Heart left ventricle (tissue), 16 donors: ENCODE measurements at regions of chr16 and their contacts with region 1.

Region 1: DNA sequence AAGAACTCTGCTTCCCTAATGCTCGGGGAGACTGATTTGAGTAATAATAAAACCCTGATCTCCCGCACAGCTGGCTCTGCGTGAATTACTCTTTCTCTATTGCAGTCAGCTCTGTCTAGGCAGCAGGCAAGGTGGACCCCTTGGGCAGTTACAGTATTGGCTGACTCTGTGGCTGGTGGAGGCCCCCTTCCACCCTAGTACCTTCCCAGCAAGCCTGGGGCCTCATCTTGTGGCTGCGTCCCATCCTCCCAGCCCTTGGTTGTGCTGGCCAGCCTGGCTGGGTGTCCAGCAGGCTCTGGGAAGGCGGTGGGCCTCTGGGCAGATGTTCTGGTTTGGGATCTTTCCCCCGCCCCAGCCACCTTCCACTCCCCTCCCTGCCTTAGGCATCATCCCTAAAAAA is 44.5 kb downstream of the CFAP20 start:
- DNase-seq: no peak
- ATAC-seq: no peak
- H3K4me3 ChIP-seq: no peak overlapping the region
- H3K27ac ChIP-seq: no peak overlapping the region
- H3K4me1 ChIP-seq: peaks cover 0 to 25% (median 9%) of the 10 kb centered on the region in 12 donors
- H3K27me3 ChIP-seq: no peaks in the 10 kb centered on the region
- CTCF ChIP-seq: no peak
- POLR2A ChIP-seq: no peak

Region 2: GRCh38 chr16:57916735-57917451 is 167.8 kb before region 1 on chr16:
- intact Hi-C with region 1: no loop called
- DNase-seq: no peak
- ATAC-seq: no peak
- H3K4me3 ChIP-seq: no peak overlapping the region
- H3K27ac ChIP-seq: no peak overlapping the region
- H3K4me1 ChIP-seq: no peaks in the 10 kb centered on the region
- H3K27me3 ChIP-seq: no peaks in the 10 kb centered on the region
- CTCF ChIP-seq: no peak
- POLR2A ChIP-seq: no peak

Region 3: DNA sequence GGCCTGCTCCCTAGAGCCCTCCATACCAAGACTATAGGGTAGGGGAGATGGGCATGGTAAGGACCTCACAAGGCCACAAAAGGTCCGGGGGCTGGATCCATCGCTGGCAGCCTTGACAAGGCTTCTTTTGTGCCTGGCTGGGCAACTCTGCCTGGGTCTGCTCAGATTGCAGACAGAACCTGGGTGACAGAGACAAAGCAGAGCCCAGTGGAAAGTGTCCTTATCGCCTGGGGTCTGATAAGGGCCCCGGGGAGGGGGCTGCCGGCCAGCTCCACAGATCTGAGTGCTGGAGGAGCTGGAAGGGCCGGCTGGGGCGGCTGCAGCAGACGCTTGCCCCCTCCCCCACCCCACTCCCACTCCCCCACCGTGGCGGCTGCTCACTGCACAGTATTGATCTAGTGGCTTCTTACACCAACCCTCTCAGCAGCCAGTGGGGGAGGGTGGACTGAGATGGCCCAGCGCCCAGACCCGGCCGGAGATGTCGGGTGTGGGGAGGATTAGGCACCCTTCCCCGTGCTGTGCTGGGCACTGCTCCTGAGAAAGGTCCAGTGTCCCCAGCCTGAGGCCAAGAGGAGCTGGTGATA is 51.8 kb before region 1 on chr16:
- intact Hi-C with region 1: loop called in 2 of 10 experiments (anchors 5 kb)
- DNase-seq: peak; percentile 78 to 87 (median 86)
- ATAC-seq: peak; percentile 82 to 86 (median 84)
- H3K4me3 ChIP-seq: peak overlapping the region in 1 of 12 donors; percentile 12
- H3K27ac ChIP-seq: peak overlapping the region in 11 of 12 donors; percentile 3 to 99 (median 86)
- H3K4me1 ChIP-seq: peaks cover 23 to 96% (median 86%) of the 10 kb centered on the region in 12 donors
- H3K27me3 ChIP-seq: peaks cover 0 to 3% (median 0%) of the 10 kb centered on the region in 9 donors
- CTCF ChIP-seq: no peak
- POLR2A ChIP-seq: no peak

Region 4: DNA sequence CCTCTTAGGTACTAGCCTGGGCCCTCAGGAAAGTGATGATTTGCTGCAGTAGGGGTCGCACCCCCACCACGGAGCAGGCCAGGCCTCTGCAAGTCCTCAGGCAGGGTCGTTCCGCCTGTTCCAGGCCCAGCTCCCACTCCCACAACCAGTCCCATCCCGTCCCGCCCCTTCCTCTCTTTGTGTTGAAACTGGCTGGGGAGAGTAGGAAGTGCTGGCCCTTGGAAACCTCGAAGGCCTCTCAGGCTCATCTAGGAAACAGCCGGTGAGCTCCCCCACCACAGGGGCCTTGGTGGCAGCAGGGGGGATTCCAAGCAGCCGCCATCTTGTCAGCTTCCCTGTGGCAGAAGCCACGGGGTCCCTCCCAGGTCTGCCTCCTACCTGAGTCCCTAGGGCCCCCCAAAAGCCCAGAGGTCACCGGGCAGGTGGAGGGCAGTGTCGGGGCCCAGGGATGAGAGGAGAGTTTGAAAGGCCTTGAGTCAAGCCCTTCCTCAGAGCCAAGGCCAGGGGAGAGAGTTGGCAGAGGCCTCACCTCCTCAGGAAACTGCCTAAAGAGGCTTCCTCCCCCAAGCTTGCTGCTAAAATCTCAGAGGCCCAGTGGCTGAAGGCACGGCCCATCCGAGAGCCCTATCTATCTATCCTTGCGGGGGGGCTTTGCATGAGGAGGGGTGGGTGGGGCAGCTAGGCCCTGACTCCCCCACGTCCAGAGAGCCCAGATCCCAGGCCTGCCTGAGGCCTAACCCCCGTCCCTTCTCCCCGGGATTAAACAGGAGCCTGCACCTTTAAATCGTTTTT is 36.9 kb before region 1 on chr16:
- intact Hi-C with region 1: loop called in 1 of 10 experiments (anchors 5 kb)
- DNase-seq: peak in 3 of 5 donors; percentile 54 to 63 (median 58)
- ATAC-seq: peak; percentile 9 to 71 (median 38)
- H3K4me3 ChIP-seq: no peak overlapping the region
- H3K27ac ChIP-seq: peak overlapping the region; percentile 43 to 86 (median 70)
- H3K4me1 ChIP-seq: peaks cover 4 to 55% (median 34%) of the 10 kb centered on the region in 12 donors
- H3K27me3 ChIP-seq: no peaks in the 10 kb centered on the region
- CTCF ChIP-seq: peak in 3 of 12 donors; percentile 13 to 25 (median 22)
- POLR2A ChIP-seq: no peak